HCT116 (cell line): ENCODE measurements at regions of chr1 and their contacts with region 1.

Region 1: DNA sequence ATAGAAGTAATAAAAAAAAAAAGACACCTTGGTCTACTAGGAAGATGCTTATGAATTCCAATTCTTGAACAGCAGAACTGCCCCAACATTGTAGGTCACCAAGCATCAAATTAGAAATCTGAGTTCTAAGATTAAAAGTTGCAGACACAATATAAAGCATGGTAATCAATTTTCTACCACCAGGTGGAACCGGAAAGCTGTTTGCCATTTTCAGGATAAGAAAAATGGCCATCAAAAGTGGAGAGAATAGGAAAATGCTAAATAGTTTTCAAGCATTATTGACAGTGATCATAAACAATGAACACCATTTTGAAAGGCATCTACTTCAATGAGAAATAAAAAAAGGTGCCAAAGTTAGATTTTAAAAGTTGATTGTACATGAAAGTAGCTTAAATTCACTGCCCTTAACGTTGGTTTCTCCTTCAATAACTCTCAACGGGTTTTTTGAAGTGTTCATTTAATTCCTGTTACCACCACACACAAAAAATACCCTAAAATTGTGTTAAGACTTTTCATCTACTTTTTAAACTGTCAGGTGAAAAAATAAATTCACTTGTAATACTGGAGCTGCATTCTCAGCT is 252.9 kb downstream of the KCNT2 start:
- DNase-seq: no peak
- ATAC-seq: peak; percentile 47
- H3K4me3 ChIP-seq: no peak overlapping the region
- H3K27ac ChIP-seq: no peak overlapping the region
- H3K4me1 ChIP-seq: no peaks in the 10 kb centered on the region
- H3K27me3 ChIP-seq: no peaks in the 10 kb centered on the region
- CTCF ChIP-seq: peak; percentile 43 to 62 (median 49)
- POLR2A ChIP-seq: no peak
- RAD21 ChIP-seq: peak; percentile 57

Region 2: DNA sequence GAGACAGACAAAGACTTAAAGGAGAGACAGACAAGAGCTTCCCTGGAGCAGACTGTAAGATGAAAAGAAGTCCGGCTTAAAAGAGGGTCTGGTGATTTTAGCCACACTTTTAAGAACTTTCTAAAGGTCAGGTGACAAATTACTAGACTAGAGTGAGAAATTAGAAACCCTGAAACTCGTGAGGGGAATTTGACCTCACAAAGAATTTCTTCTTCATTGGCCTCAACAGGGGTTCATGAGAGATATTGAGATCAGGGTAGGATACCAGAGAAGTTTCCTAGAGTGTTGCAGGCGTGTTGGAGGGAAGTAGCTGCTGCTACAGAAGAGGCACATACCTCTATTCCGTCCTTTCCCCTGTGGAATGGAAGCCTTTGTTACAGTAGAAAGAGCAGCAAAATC is 631.5 kb before region 1 on chr1:
- CTCF ChIA-PET with region 1: no interaction called
- POLR2A ChIA-PET with region 1: no interaction called
- RAD21 ChIA-PET with region 1: no interaction called
- intact Hi-C with region 1: no loop called
- DNase-seq: no peak
- ATAC-seq: no peak
- H3K4me3 ChIP-seq: no peak overlapping the region
- H3K27ac ChIP-seq: no peak overlapping the region
- H3K4me1 ChIP-seq: no peaks in the 10 kb centered on the region
- H3K27me3 ChIP-seq: no peaks in the 10 kb centered on the region
- CTCF ChIP-seq: no peak
- POLR2A ChIP-seq: no peak
- RAD21 ChIP-seq: no peak

Region 3: DNA sequence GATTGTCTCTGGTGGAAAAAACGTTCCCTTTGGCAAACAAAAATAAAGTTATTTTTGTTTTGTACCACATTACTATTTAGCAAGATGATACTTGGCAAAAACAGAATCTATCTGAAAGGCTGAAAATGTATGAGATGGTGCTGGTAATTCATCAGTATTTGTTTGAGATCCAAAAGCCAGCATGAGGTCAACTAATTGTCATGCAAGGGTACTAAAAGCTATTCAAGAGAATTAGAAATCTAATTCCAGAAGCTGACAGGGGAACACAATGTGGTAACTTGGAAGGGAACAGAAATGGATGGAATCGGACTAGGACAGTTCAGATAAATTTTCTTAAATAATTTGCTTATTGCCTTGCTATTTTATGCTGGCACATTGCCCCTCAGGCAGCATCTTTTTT is 10.8 kb before region 1 on chr1:
- CTCF ChIA-PET with region 1: interaction called, 14 read pairs
- POLR2A ChIA-PET with region 1: no interaction called
- RAD21 ChIA-PET with region 1: no interaction called
- intact Hi-C with region 1: no loop called
- DNase-seq: no peak
- ATAC-seq: no peak
- H3K4me3 ChIP-seq: no peak overlapping the region
- H3K27ac ChIP-seq: no peak overlapping the region
- H3K4me1 ChIP-seq: no peaks in the 10 kb centered on the region
- H3K27me3 ChIP-seq: no peaks in the 10 kb centered on the region
- CTCF ChIP-seq: no peak
- POLR2A ChIP-seq: no peak
- RAD21 ChIP-seq: no peak

Region 4: GRCh38 chr1:196372896-196373536 is 17.7 kb after region 1 on chr1:
- CTCF ChIA-PET with region 1: interaction called, 11 read pairs
- POLR2A ChIA-PET with region 1: no interaction called
- RAD21 ChIA-PET with region 1: no interaction called
- intact Hi-C with region 1: no loop called
- DNase-seq: peak; percentile 34
- ATAC-seq: peak; percentile 63; the same call in 1 of the 2 replicates
- H3K4me3 ChIP-seq: no peak overlapping the region
- H3K27ac ChIP-seq: no peak overlapping the region
- H3K4me1 ChIP-seq: no peaks in the 10 kb centered on the region
- H3K27me3 ChIP-seq: no peaks in the 10 kb centered on the region
- CTCF ChIP-seq: peak in 2 of 3 experiments; percentile 26 to 40; a peak in 4 of 6 replicates
- POLR2A ChIP-seq: no peak
- RAD21 ChIP-seq: peak; percentile 27; the same call in 1 of the 2 replicates

Region 5: DNA sequence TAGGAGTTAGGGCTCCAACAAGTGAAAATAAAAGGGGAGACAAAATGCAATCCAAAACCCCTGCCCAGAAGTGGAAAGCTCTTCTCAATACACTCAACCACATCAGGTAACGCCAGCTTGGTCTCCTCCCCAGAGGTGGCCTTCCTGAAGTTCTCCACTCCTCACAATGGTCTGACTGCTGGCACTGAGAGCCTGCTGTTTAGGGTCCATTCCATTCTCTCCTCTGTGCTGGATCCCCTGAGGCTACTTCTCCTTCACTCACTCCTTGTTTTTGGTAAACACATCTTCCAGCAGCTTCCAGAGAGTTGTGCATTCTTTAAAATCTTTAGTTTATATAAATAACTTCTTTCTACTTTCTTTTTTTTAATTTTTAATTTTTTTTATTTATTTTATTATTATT is 63.5 kb after region 1 on chr1:
- CTCF ChIA-PET with region 1: no interaction called
- POLR2A ChIA-PET with region 1: no interaction called
- RAD21 ChIA-PET with region 1: no interaction called
- intact Hi-C with region 1: loop called (anchors 10 kb)
- DNase-seq: no peak
- ATAC-seq: no peak
- H3K4me3 ChIP-seq: no peak overlapping the region
- H3K27ac ChIP-seq: no peak overlapping the region
- H3K4me1 ChIP-seq: no peaks in the 10 kb centered on the region
- H3K27me3 ChIP-seq: no peaks in the 10 kb centered on the region
- CTCF ChIP-seq: no peak
- POLR2A ChIP-seq: no peak
- RAD21 ChIP-seq: no peak

Region 6: DNA sequence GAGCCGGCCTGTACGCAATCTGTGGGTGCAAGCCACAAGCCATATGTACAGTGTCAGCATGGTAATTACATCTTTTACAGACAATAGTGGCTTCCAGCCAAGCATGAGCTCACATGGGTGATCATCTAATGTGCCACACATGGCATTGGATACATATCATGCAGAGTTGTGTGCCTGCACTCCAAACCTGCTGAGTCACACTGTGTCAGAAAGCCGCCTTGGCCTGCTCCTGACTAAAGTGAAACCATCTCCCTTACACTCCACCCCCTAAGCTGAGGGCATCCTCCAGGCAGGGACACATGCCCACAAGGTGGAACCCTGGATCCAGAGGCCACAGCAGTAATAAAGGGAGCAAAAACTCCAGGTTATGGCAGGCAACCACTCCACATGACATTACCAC is 180.4 kb after region 1 on chr1:
- CTCF ChIA-PET with region 1: no interaction called
- POLR2A ChIA-PET with region 1: no interaction called
- RAD21 ChIA-PET with region 1: no interaction called
- intact Hi-C with region 1: no loop called
- DNase-seq: peak; percentile 15
- ATAC-seq: no peak
- H3K4me3 ChIP-seq: no peak overlapping the region
- H3K27ac ChIP-seq: no peak overlapping the region
- H3K4me1 ChIP-seq: no peaks in the 10 kb centered on the region
- H3K27me3 ChIP-seq: no peaks in the 10 kb centered on the region
- CTCF ChIP-seq: no peak
- POLR2A ChIP-seq: no peak
- RAD21 ChIP-seq: no peak

Region 7: GRCh38 chr1:196660852-196661251 is 305.6 kb after region 1 on chr1:
- CTCF ChIA-PET with region 1: interaction called, 28 read pairs
- POLR2A ChIA-PET with region 1: no interaction called
- RAD21 ChIA-PET with region 1: interaction called, 4 read pairs
- intact Hi-C with region 1: loop called (anchors 1 kb)
- DNase-seq: peak; percentile 23
- ATAC-seq: peak; percentile 69; the same call in 1 of the 2 replicates
- H3K4me3 ChIP-seq: no peak overlapping the region
- H3K27ac ChIP-seq: no peak overlapping the region
- H3K4me1 ChIP-seq: no peaks in the 10 kb centered on the region
- H3K27me3 ChIP-seq: no peaks in the 10 kb centered on the region
- CTCF ChIP-seq: peak in 2 of 3 experiments; percentile 55 to 60; a peak in 4 of 6 replicates
- POLR2A ChIP-seq: no peak
- RAD21 ChIP-seq: peak; percentile 82